Activated naive CD4-positive, alpha-beta T cell treated with anti-CD3 and anti-CD28 coated beads for 36 hours (primary cell): ENCODE measurements at regions of chr12 and their contacts with region 1.

Region 1: GRCh38 chr12:14723763-14724162 is 27.4 kb upstream of the GUCY2C start:
- DNase-seq: peak; percentile 74
- H3K4me3 Mint-ChIP-seq: no peak overlapping the region
- H3K27ac Mint-ChIP-seq: no peak overlapping the region
- H3K4me1 Mint-ChIP-seq: no peaks in the 10 kb centered on the region
- H3K27me3 Mint-ChIP-seq: no peaks in the 10 kb centered on the region

Region 2: DNA sequence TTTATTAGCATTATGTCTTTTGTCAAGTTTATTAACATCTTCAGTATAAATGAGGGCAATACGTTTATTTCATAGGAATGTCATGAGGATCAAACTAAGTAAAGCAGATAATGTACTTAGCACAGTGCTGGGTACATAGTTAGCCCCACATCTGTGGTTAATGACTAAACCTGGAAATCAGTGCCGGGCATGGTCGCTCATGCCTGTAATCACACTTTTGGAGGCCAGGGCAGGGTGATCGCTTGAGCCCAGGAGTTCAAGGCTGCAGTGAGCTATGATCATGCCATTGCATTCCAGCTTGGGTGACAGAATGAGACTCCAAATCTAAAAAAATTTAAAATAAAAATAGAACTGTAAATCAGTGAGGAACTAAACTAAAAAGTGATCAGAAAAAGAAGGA is 17.4 kb after region 1 on chr12:
- CTCF ChIA-PET with region 1: interaction called, 15 read pairs
- intact Hi-C with region 1: no loop called
- DNase-seq: no peak
- H3K4me3 Mint-ChIP-seq: no peak overlapping the region
- H3K27ac Mint-ChIP-seq: no peak overlapping the region
- H3K4me1 Mint-ChIP-seq: no peaks in the 10 kb centered on the region
- H3K27me3 Mint-ChIP-seq: no peaks in the 10 kb centered on the region